ENCODE measurements at regions of chr15 and their contacts with region 1.

Region 1: DNA sequence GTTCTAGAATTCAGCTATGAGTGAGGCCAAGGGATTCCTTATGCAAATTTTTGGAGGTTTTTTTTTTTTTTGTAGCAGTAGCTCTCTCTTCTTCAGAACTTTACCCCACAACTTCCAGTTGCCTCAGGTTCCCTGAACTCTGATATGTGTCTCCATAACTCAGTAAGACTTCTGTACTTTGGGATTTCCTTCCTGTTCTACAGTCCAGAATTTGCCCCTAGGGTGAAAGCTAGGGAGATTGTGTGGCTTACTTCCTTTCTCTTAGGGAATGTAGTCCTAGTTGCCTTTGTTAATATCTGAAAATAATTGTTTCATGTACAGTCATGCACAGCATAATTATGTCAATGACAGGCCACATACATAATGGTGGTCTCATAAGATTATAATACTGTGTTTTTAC is 30.8 kb downstream of the LRRC28 start:
- DNase-seq: peak; percentile 4
- ATAC-seq: no peak
- H3K4me3 ChIP-seq: no peak overlapping the region
- H3K27ac ChIP-seq: no peak overlapping the region
- H3K4me1 ChIP-seq: no peaks in the 10 kb centered on the region
- H3K27me3 ChIP-seq: no peaks in the 10 kb centered on the region
- CTCF ChIP-seq: no peak

Region 2: GRCh38 chr15:99361541-99362185 is 79.5 kb after region 1 on chr15:
- CTCF ChIA-PET with region 1: no interaction called
- POLR2A ChIA-PET with region 1: no interaction called
- intact Hi-C with region 1: loop called (anchors 5 kb)
- DNase-seq: peak; percentile 51
- ATAC-seq: no peak
- H3K4me3 ChIP-seq: no peak overlapping the region
- H3K27ac ChIP-seq: no peak overlapping the region
- H3K4me1 ChIP-seq: no peaks in the 10 kb centered on the region
- H3K27me3 ChIP-seq: no peaks in the 10 kb centered on the region
- CTCF ChIP-seq: peak; percentile 74

Measured in PC-3 (cell line).